ENCODE measurements at regions of chr3 and their contacts with region 1.

Region 1: GRCh38 chr3:186930641-186931531 is 560 bp downstream of the ST6GAL1 start:
- DNase-seq: peak; percentile 23 to 39
- ATAC-seq: peak; percentile 83 to 85
- H3K4me3 ChIP-seq: peak overlapping the region; percentile 84
- H3K27ac ChIP-seq: peak overlapping the region; percentile 74 to 87
- H3K4me1 ChIP-seq: no peaks in the 10 kb centered on the region
- CTCF ChIP-seq: no peak
- EP300 ChIP-seq: no peak
- POLR2A ChIP-seq: no peak
- RAD21 ChIP-seq: 0 out of 5 replicates have a peak, but pooled peaks of 1 of the 2 experiments have one; percentile 24

Region 2: GRCh38 chr3:186849374-186849975 is 81.4 kb before region 1 on chr3:
- CTCF ChIA-PET with region 1: interaction called, 16 read pairs
- POLR2A ChIA-PET with region 1: no interaction called
- DNase-seq: peak; percentile 28 to 42
- ATAC-seq: peak in 1 of 2 experiments; percentile 79; a peak in 3 of 6 replicates
- H3K4me3 ChIP-seq: no peak overlapping the region
- H3K27ac ChIP-seq: no peak overlapping the region
- H3K4me1 ChIP-seq: no peaks in the 10 kb centered on the region
- CTCF ChIP-seq: peak; percentile 61
- EP300 ChIP-seq: no peak
- POLR2A ChIP-seq: no peak
- RAD21 ChIP-seq: peak; percentile 70 to 77

Measured in A549 (cell line).